ENCODE measurements at regions of chr15 and their contacts with region 1.

Region 1: GRCh38 chr15:70488002-70488605 is 275.3 kb downstream of the UACA start:
- DNase-seq: peak in 2 of 3 donors; percentile 85 to 86
- ATAC-seq: peak; percentile 72
- H3K4me3 ChIP-seq: no peak overlapping the region
- H3K4me1 ChIP-seq: peaks cover 9% of the 10 kb centered on the region
- CTCF ChIP-seq: peak; percentile 98

Region 2: DNA sequence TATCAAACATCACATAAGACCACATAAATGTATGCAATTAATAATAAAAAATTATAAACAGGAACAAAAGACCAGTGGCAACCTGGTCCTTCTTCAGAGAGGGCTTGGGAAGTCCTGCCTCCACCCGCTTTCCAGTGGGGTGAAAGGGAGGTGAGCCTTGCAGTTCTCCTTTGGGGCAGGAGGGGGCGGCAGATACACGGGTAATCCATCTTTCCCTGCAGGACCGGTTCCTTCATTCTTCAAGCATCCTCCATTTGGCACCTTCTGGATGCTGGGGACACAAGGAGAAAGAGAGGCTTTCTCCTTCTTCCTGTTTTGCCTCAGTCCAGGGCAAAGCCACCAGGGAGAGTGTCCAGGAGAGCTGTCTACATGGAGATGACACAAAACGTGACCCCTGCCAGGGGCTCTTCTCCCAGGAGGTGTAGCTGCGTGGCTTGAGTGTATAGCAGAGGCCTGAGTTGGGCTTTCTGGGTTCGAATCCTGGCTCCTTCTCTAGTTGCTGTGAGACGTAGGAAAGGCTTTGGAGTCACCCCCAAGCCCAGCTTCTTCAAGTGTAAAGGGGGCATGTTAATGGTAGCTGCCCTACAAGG is 1012.2 kb before region 1 on chr15:
- intact Hi-C with region 1: loop called (anchors 10 kb)
- DNase-seq: peak; percentile 68 to 91 (median 88)
- ATAC-seq: peak; percentile 96
- H3K4me3 ChIP-seq: no peak overlapping the region
- H3K4me1 ChIP-seq: no peaks in the 10 kb centered on the region
- CTCF ChIP-seq: peak; percentile 73

Region 3: DNA sequence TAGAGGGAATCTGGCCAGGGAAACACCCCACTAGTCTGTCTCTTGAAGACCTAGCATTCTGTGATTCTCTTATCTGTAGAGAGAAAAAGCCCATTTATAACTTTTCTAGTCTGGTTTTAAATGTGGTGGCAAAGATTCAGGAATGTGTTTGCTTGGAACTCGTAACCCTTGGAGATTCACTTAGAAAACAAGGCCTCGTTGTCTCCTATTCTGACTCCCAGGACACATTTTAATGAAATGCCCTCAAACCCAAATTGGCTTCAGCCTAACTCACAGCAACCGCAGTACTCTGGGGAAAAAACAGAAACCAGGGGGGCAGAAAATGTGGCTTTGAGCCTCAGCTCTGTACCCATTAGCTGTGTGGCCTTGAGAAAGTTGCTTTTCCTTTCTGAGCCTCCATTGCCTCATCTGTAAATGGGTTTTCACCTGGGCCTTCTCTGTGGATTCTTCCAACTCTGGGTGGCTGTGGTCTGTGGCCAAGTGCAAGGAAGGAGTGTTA is 999.0 kb before region 1 on chr15:
- intact Hi-C with region 1: loop called in 1 of 2 experiments (anchors 10 kb)
- DNase-seq: no peak
- ATAC-seq: no peak
- H3K4me3 ChIP-seq: no peak overlapping the region
- H3K4me1 ChIP-seq: no peaks in the 10 kb centered on the region
- CTCF ChIP-seq: no peak

Region 4: GRCh38 chr15:69576035-69576526 is 912.0 kb before region 1 on chr15:
- intact Hi-C with region 1: loop called in 1 of 2 experiments (anchors 10 kb)
- DNase-seq: peak in 2 of 3 donors; percentile 85 to 88
- ATAC-seq: peak; percentile 70
- H3K4me3 ChIP-seq: no peak overlapping the region
- H3K4me1 ChIP-seq: peaks cover 29% of the 10 kb centered on the region
- CTCF ChIP-seq: peak; percentile 54

Measured in mucosa of descending colon (tissue), 3 donors.